ENCODE measurements at regions of chr7 and their contacts with region 1.

Region 1: GRCh38 chr7:85104432-85105205 is 82.2 kb downstream of the SEMA3D start:
- DNase-seq: peak; percentile 80
- H3K4me3 ChIP-seq: peak overlapping the region in 1 of 3 experiments; percentile 45
- H3K27ac ChIP-seq: peak overlapping the region; percentile 53
- H3K4me1 ChIP-seq: peaks cover 52% of the 10 kb centered on the region
- H3K27me3 ChIP-seq: no peaks in the 10 kb centered on the region
- CTCF ChIP-seq: no peak
- POLR2A ChIP-seq: no peak

Region 2: GRCh38 chr7:84783141-84783778 is 321.4 kb before region 1 on chr7:
- CTCF ChIA-PET with region 1: no interaction called
- POLR2A ChIA-PET with region 1: no interaction called
- dilution Hi-C with region 1: no loop called
- intact Hi-C with region 1: no loop called
- DNase-seq: no peak
- H3K4me3 ChIP-seq: no peak overlapping the region
- H3K27ac ChIP-seq: no peak overlapping the region
- H3K4me1 ChIP-seq: no peaks in the 10 kb centered on the region
- H3K27me3 ChIP-seq: no peaks in the 10 kb centered on the region
- CTCF ChIP-seq: no peak
- POLR2A ChIP-seq: no peak

Region 3: GRCh38 chr7:85054306-85054705 is 50.3 kb before region 1 on chr7:
- CTCF ChIA-PET with region 1: no interaction called
- POLR2A ChIA-PET with region 1: no interaction called
- dilution Hi-C with region 1: no loop called
- intact Hi-C with region 1: no loop called
- DNase-seq: no peak
- H3K4me3 ChIP-seq: no peak overlapping the region
- H3K27ac ChIP-seq: no peak overlapping the region
- H3K4me1 ChIP-seq: no peaks in the 10 kb centered on the region
- H3K27me3 ChIP-seq: no peaks in the 10 kb centered on the region
- CTCF ChIP-seq: no peak
- POLR2A ChIP-seq: no peak

Region 4: DNA sequence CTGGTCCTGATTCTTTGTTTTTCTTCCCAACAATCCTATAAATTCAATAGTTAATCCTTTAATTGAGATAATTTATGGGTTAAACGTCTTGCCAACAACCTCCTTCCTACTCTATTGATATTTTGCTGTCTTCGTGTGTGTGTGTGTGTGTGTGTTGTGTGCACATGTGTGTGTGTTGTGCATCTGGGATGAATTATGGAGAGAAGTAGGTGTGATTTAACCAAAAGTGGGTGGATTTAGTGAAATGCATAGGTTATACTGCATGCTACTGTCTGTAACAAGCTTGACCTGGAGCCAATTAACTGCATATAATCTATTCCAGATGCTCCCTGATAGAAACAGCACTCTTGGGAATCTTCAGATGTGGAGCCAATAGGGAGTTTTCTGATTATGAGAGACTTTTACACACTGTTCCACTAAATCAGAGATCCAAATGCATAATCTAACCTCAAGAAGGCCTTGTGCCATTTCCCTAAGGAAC is 21.1 kb after region 1 on chr7:
- CTCF ChIA-PET with region 1: no interaction called
- POLR2A ChIA-PET with region 1: no interaction called
- dilution Hi-C with region 1: no loop called
- intact Hi-C with region 1: no loop called
- DNase-seq: no peak
- H3K4me3 ChIP-seq: no peak overlapping the region
- H3K27ac ChIP-seq: no peak overlapping the region
- H3K4me1 ChIP-seq: no peaks in the 10 kb centered on the region
- H3K27me3 ChIP-seq: no peaks in the 10 kb centered on the region
- CTCF ChIP-seq: no peak
- POLR2A ChIP-seq: no peak

Region 5: GRCh38 chr7:85135977-85136376 is 31.4 kb after region 1 on chr7:
- CTCF ChIA-PET with region 1: interaction called, 4 read pairs
- POLR2A ChIA-PET with region 1: no interaction called
- dilution Hi-C with region 1: no loop called
- intact Hi-C with region 1: loop called (anchors 1 kb)
- DNase-seq: peak; percentile 66
- H3K4me3 ChIP-seq: no peak overlapping the region
- H3K27ac ChIP-seq: peak overlapping the region; percentile 59
- H3K4me1 ChIP-seq: peaks cover 18% of the 10 kb centered on the region
- H3K27me3 ChIP-seq: no peaks in the 10 kb centered on the region
- CTCF ChIP-seq: no peak
- POLR2A ChIP-seq: peak; percentile 62

Measured in endothelial cell of umbilical vein (primary cell).